GM12878 (cell line): ENCODE measurements at regions of chr17 and their contacts with region 1.

Region 1: DNA sequence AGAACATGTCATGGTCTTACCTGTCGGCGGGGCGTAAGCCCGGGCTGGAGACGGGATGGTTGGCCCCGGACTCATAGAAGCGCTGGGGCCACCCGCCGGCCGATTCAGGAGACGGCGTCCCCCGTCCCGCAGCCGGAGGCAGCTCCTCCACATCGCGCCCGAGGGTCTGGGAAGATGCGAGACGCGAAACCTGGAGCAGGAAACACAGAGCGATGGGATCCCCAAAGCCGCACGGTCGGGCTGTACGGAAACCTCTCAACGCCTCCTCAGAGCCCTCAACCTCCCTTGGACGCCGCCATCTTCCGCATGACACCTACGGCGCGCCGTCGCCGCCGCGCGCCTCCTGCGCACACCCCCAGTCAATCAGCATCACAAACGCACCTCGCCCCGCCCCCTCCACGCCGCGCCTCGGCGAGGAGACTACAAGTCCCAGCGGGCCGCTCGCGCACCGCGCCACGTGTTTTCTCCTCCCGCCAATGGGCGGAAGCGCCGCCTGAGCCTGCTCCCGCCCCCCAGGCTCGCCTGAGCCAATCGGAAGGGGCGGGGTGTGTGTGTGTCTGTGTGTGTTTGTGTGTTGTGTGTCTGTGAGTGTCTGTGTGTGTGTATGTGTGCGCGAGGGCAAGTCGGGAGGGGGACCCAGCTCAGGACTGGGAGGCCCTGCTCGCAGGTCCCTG is at the starts of genes ATPAF2 and GID4:
- DNase-seq: peak; percentile 95
- ATAC-seq: peak; percentile 95
- H3K4me3 ChIP-seq: peak within 1 kb of the TSS; percentile 87
- H3K27ac ChIP-seq: peak within 1 kb of the TSS; percentile 60
- H3K4me1 ChIP-seq: peaks cover 17% of the 10 kb centered on the region
- H3K27me3 ChIP-seq: no peaks in the 10 kb centered on the region
- CTCF ChIP-seq: no peak
- EP300 ChIP-seq: no peak
- POLR2A ChIP-seq: peak; percentile 79
- RAD21 ChIP-seq: no peak
- polyA plus RNA-seq, gene ATPAF2: 6.5 to 15.3 TPM
- polyA plus RNA-seq, gene GID4: 0.93 to 1.6 TPM

Region 2: DNA sequence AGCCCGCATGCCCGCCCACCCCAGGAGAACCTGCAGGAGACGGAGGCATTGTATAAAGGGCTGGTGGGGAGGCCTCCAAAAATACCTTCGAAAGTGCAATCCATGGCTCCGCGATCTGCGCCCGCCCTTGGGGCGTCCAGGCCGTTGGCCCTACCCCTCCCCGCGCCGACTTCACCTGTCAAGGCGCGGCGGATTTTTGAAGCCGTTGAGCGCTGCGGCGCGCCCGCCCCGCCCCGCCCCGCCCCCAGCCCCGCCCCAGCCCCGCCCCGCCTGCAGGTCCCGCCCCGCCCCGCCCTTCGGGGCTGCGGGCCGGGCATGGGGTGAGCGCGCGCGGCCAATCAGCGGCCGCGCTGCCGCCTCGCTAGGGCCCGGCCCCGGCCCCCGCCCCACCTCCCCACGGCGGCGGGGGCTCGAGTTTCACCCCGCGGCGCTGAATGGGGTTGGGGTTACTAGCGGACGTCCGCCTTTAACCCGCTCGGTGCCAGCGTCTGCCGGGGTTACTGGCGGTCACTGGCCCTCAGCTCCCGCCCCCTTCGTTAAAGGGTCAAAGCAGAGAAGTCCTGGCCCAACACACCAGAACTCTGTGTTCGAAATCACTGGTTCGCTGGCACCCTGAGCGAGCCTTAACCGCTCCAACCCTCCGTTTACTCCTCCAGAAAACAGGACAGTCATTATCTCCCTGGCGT is 215.4 kb before region 1 on chr17:
- CTCF ChIA-PET with region 1: no interaction called
- POLR2A ChIA-PET with region 1: no interaction called
- RAD21 ChIA-PET with region 1: no interaction called
- SMC1A ChIA-PET with region 1: no interaction called
- in situ Hi-C with region 1: no loop called
- intact Hi-C with region 1: loop called (anchors 5 kb)
- DNase-seq: no peak
- ATAC-seq: peak; percentile 84
- H3K4me3 ChIP-seq: peak overlapping the region; percentile 63
- H3K27ac ChIP-seq: peak overlapping the region; percentile 82
- H3K4me1 ChIP-seq: peaks cover 52% of the 10 kb centered on the region
- H3K27me3 ChIP-seq: no peaks in the 10 kb centered on the region
- CTCF ChIP-seq: no peak
- EP300 ChIP-seq: no peak
- POLR2A ChIP-seq: peak; percentile 50; the same call in 1 of the 2 replicates
- RAD21 ChIP-seq: no peak

Region 3: DNA sequence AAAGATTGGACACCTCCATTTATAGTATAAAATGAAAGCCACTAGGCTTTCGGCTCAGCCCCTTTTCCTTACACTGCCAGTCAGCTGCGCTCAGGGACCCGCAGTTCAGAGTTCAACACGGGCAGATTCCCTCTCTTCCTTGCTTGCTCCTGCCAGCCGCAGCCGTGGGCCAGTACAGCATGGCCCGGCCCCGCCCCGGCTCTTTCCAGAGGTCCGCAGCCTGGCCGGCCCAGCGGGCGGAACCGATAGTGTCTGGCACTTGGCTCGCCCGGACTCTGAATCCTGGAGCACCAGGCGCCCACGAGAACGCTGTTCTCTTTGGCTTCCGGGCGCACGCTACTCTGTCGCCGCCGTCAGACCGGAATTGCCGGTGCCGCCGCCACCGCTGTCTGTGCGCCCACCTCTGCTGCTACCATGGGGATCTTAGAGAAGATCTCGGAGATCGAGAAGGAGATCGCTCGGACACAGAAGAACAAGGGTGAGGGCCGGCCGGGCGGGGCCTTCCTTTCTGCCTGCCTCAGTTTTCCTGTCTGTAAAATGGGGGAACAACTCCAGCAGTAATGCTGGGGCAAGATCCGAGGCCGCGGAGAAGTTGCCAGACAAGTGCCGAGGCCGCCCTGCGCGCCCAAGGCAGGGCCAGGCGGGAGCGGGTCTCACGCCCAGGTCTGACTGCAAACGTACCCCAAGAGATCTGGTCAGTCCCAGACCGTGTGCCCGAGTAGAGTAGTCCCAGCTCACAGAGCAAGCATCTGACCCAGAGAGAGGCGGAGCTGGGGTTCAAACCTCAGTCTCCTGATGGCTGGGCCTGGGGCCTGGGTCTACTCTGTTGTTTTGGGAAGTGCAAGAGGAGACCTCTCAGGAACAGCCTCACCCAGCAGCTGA is 48.9 kb after region 1 on chr17 and contains the start of gene DRG2:
- CTCF ChIA-PET with region 1: no interaction called
- POLR2A ChIA-PET with region 1: no interaction called
- RAD21 ChIA-PET with region 1: no interaction called
- SMC1A ChIA-PET with region 1: no interaction called
- in situ Hi-C with region 1: no loop called
- intact Hi-C with region 1: loop called (anchors 1 kb)
- DNase-seq: peak; percentile 65
- ATAC-seq: peak; percentile 97
- H3K4me3 ChIP-seq: peak within 1 kb of the TSS; percentile 90
- H3K27ac ChIP-seq: peak within 1 kb of the TSS; percentile 85
- H3K4me1 ChIP-seq: no peaks in the 10 kb centered on the region
- H3K27me3 ChIP-seq: no peaks in the 10 kb centered on the region
- CTCF ChIP-seq: 0 out of 6 replicates have a peak, but pooled peaks of 1 of the 3 experiments have one; percentile 5
- EP300 ChIP-seq: no peak
- POLR2A ChIP-seq: peak; percentile 93
- RAD21 ChIP-seq: no peak
- polyA plus RNA-seq, gene DRG2: 9.1 to 13.7 TPM

Region 4: DNA sequence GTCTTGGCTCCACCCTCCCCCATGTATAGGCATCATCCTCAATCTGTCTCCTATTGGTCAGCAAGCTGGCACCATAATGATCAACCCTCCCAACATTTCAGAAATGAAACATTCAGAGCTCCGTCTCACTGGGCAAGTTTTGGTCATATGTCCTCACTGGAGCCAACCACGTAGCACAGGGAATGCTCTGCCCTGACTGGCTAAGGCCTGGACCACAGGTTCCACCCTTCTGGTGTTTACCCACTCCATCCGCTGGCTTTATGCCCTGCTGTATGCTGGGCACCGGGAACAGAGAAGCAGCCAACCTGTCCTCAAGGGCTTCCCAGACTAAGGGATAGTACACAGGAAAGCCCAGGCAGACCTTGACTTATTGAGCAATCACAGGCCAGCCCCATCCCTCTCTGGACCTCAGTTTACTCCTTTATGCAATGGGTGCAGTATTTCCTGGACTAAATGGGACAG is 90.1 kb after region 1 on chr17:
- CTCF ChIA-PET with region 1: no interaction called
- POLR2A ChIA-PET with region 1: no interaction called
- RAD21 ChIA-PET with region 1: no interaction called
- SMC1A ChIA-PET with region 1: no interaction called
- in situ Hi-C with region 1: no loop called
- intact Hi-C with region 1: no loop called
- DNase-seq: no peak
- ATAC-seq: peak; percentile 65
- H3K4me3 ChIP-seq: no peak overlapping the region
- H3K27ac ChIP-seq: no peak overlapping the region
- H3K4me1 ChIP-seq: no peaks in the 10 kb centered on the region
- H3K27me3 ChIP-seq: no peaks in the 10 kb centered on the region; a peak in 1 of 4 replicates
- CTCF ChIP-seq: no peak
- EP300 ChIP-seq: no peak
- POLR2A ChIP-seq: no peak
- RAD21 ChIP-seq: no peak

Region 5: GRCh38 chr17:18158022-18158600 is 119.1 kb after region 1 on chr17:
- CTCF ChIA-PET with region 1: no interaction called
- POLR2A ChIA-PET with region 1: no interaction called
- RAD21 ChIA-PET with region 1: no interaction called
- SMC1A ChIA-PET with region 1: no interaction called
- in situ Hi-C with region 1: no loop called
- intact Hi-C with region 1: no loop called
- DNase-seq: peak; percentile 68
- ATAC-seq: peak; percentile 79
- H3K4me3 ChIP-seq: peak overlapping the region; percentile 65; the same call in 1 of the 2 replicates
- H3K27ac ChIP-seq: no peak overlapping the region; the same call in 1 of the 2 replicates
- H3K4me1 ChIP-seq: peaks cover 41% of the 10 kb centered on the region
- H3K27me3 ChIP-seq: no peaks in the 10 kb centered on the region
- CTCF ChIP-seq: no peak
- EP300 ChIP-seq: no peak
- POLR2A ChIP-seq: no peak
- RAD21 ChIP-seq: no peak